A549 (cell line): ENCODE measurements at regions of chr5 and their contacts with region 1.

Region 1: DNA sequence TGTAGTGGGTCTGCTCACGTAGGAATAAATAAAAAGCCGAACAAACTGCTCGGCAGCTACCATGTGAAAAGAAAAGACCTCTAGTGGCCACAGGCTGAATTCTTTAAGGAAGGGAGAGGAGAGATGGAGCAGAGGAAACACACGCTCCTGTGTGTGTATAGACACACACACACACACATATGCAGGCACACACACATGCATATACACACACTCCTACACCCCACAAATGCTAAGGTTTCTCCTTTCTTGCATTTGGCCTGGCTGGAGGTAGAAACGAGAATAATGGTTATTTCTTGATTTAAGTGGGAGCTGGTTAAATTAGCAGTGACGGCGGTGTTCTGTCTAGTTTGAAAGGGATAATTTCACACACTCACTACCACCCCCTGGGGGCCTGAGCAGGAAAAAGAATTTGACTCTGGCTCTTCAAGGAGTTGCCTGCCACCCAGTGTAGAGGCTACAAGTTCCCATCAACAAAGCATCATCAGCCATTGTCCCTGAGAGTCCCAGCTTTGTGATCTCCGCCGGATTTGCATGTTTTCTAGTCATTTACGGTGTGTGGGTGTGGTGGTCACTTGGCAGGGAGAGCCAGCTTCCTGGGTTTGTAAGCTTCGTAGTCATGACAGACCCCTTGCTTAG is at the start of gene INSYN2B:
- DNase-seq: peak; percentile 81 to 86
- ATAC-seq: peak; percentile 94 to 97
- H3K4me3 ChIP-seq: peak within 1 kb of the TSS; percentile 38
- H3K27ac ChIP-seq: peak within 1 kb of the TSS; percentile 34 to 72; a peak in 5 of 6 replicates
- H3K4me1 ChIP-seq: peaks cover 18% of the 10 kb centered on the region
- CTCF ChIP-seq: peak; percentile 97
- EP300 ChIP-seq: no peak
- POLR2A ChIP-seq: no peak
- RAD21 ChIP-seq: peak; percentile 66 to 85
- polyA plus RNA-seq, gene INSYN2B: 0.26 and 0.38 TPM in 2 replicates

Region 2: DNA sequence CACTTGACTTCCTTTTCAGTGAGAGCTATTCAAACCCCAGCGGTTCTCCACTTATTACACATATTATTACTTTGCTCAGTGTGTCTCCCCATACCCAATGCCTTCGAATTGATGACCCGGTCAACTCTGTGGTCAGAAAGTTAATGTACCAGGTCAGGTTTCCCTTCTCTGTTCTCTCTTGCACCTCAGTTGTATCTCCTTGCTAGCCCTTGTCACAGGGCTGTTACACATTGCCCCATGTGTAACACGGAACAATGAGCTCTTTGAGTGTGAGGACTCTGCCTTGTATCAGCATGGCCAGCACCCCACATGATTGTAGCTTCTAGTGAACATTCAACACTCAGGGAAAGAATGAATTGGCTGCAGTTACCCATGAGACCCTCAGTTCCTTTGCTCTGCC is 269.9 kb before region 1 on chr5:
- CTCF ChIA-PET with region 1: interaction called, 24 read pairs
- POLR2A ChIA-PET with region 1: interaction called, 3 read pairs
- DNase-seq: no peak
- ATAC-seq: no peak
- H3K4me3 ChIP-seq: no peak overlapping the region
- H3K27ac ChIP-seq: no peak overlapping the region
- H3K4me1 ChIP-seq: peaks cover 17% of the 10 kb centered on the region
- CTCF ChIP-seq: no peak
- EP300 ChIP-seq: no peak
- POLR2A ChIP-seq: no peak
- RAD21 ChIP-seq: no peak

Region 3: GRCh38 chr5:169850409-169850808 is 130.1 kb before region 1 on chr5:
- CTCF ChIA-PET with region 1: interaction called, 17 read pairs
- POLR2A ChIA-PET with region 1: no interaction called
- DNase-seq: peak in 1 of 2 experiments; percentile 30
- ATAC-seq: no peak
- H3K4me3 ChIP-seq: no peak overlapping the region
- H3K27ac ChIP-seq: no peak overlapping the region
- H3K4me1 ChIP-seq: no peaks in the 10 kb centered on the region
- CTCF ChIP-seq: 0 out of 3 replicates have a peak, but pooled peaks have one; percentile 9
- EP300 ChIP-seq: no peak
- POLR2A ChIP-seq: no peak
- RAD21 ChIP-seq: 0 out of 5 replicates have a peak, but pooled peaks of 1 of the 2 experiments have one; percentile 18

Region 4: DNA sequence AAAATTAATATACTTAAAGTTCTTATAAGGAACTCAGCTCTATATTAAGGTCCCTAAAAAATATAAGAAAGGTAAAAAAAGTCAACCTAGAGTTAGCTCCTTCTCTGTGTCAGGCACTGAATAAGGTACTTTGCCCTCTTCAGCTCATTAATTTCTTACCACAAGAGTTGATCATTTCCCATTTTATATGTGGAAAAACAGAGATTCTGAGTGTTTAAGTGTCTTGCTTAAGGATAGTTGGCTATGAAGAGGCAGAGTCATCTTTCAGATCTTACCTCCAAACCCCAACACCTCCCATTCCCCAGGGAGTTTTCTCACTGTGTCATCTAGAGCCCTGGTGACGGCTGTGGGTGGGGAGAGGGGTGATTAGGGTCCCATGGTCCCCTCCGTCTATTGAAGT is 40.8 kb before region 1 on chr5:
- CTCF ChIA-PET with region 1: interaction called, 15 read pairs
- POLR2A ChIA-PET with region 1: no interaction called
- DNase-seq: no peak
- ATAC-seq: no peak
- H3K4me3 ChIP-seq: no peak overlapping the region
- H3K27ac ChIP-seq: no peak overlapping the region
- H3K4me1 ChIP-seq: no peaks in the 10 kb centered on the region
- CTCF ChIP-seq: no peak
- EP300 ChIP-seq: no peak
- POLR2A ChIP-seq: no peak
- RAD21 ChIP-seq: no peak

Region 5: DNA sequence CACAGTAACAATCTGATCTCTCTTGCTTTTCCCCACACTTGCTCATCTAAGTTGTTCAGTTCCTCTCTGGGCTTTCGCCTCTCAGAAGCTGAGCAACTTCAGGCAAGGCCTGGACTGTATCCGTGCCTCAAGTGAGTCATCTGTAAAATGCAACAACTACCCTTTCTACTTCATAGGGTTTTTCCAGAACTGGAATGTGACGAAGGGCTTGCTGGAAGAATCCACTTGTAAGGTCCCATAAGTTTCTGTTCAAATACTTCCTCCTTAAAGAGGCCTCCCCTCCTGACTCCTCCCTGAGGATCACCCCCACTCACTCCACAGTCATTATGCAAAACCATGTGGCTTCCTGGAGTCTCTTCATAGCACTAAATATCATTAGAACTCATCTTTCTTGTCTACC is 17.3 kb after region 1 on chr5:
- CTCF ChIA-PET with region 1: interaction called, 47 read pairs
- POLR2A ChIA-PET with region 1: no interaction called
- DNase-seq: no peak
- ATAC-seq: no peak
- H3K4me3 ChIP-seq: no peak overlapping the region
- H3K27ac ChIP-seq: no peak overlapping the region
- H3K4me1 ChIP-seq: no peaks in the 10 kb centered on the region
- CTCF ChIP-seq: no peak
- EP300 ChIP-seq: no peak
- POLR2A ChIP-seq: no peak
- RAD21 ChIP-seq: no peak

Region 6: DNA sequence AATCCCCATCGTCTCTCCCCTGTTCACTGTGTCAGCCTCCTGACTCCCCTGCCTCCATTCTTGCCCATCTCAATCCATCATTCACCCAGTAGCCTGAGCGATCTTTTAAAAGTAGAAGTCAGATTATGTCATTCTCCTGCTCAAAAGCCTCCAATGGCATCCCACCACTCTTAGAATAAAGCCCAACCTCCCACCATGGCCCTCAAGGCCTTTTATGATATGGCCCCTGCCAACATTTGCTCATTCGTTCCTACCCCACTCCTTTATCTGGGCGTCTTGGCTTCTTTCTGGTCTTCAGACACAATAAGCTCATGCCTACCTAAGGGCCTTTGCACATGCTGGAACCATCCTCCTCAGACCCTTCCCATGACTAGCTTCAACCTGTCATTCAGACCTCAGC is 444.1 kb after region 1 on chr5:
- CTCF ChIA-PET with region 1: no interaction called
- POLR2A ChIA-PET with region 1: no interaction called
- DNase-seq: no peak
- ATAC-seq: no peak
- H3K4me3 ChIP-seq: no peak overlapping the region
- H3K27ac ChIP-seq: no peak overlapping the region
- H3K4me1 ChIP-seq: no peaks in the 10 kb centered on the region
- CTCF ChIP-seq: no peak
- EP300 ChIP-seq: no peak
- POLR2A ChIP-seq: no peak
- RAD21 ChIP-seq: no peak